ENCODE measurements at regions of chr1 and their contacts with region 1.

Region 1: GRCh38 chr1:209505044-209505443 is 78.5 kb upstream of the CAMK1G start:
- DNase-seq: no peak
- ATAC-seq: no peak
- H3K4me3 ChIP-seq: no peak overlapping the region
- H3K27ac ChIP-seq: no peak overlapping the region
- H3K4me1 ChIP-seq: no peaks in the 10 kb centered on the region
- CTCF ChIP-seq: no peak
- EP300 ChIP-seq: no peak
- POLR2A ChIP-seq: no peak
- RAD21 ChIP-seq: no peak

Region 2: GRCh38 chr1:209493559-209493958 is 11.5 kb before region 1 on chr1:
- CTCF ChIA-PET with region 1: interaction called, 11 read pairs
- POLR2A ChIA-PET with region 1: no interaction called
- DNase-seq: no peak
- ATAC-seq: no peak
- H3K4me3 ChIP-seq: no peak overlapping the region
- H3K27ac ChIP-seq: no peak overlapping the region
- H3K4me1 ChIP-seq: no peaks in the 10 kb centered on the region
- CTCF ChIP-seq: no peak
- EP300 ChIP-seq: no peak
- POLR2A ChIP-seq: no peak
- RAD21 ChIP-seq: no peak

Region 3: GRCh38 chr1:209527993-209528392 is 22.9 kb after region 1 on chr1:
- CTCF ChIA-PET with region 1: no interaction called
- POLR2A ChIA-PET with region 1: no interaction called
- DNase-seq: peak; percentile 12 to 81
- ATAC-seq: peak; percentile 71 to 91
- H3K4me3 ChIP-seq: no peak overlapping the region
- H3K27ac ChIP-seq: peak overlapping the region; percentile 69
- H3K4me1 ChIP-seq: peaks cover 18% of the 10 kb centered on the region
- CTCF ChIP-seq: no peak
- EP300 ChIP-seq: no peak
- POLR2A ChIP-seq: no peak
- RAD21 ChIP-seq: no peak

Region 4: DNA sequence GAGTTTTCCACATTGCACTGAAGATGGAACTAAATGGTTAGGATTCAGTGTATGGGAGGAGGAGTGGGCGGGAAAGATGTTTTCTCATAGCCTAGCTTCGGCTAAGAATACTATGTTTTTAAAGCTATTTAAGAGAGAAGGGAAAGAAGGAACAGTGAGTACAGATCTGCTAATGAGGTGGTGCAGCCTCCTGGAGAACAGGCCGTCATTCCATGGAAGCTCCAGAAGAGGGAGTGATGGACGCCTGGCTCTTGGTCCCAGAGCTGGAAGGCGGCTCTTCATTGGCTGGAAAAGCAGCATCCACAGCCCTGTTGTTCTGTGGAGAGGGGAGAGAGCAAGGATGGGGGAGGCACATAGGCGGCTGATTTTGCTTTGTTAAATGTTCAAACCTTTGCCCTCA is 85.4 kb after region 1 on chr1:
- CTCF ChIA-PET with region 1: no interaction called
- POLR2A ChIA-PET with region 1: no interaction called
- DNase-seq: peak in 1 of 2 experiments; percentile 43
- ATAC-seq: peak; percentile 60 to 87; a peak in 5 of 6 replicates
- H3K4me3 ChIP-seq: no peak overlapping the region
- H3K27ac ChIP-seq: no peak overlapping the region
- H3K4me1 ChIP-seq: peaks cover 10% of the 10 kb centered on the region
- CTCF ChIP-seq: no peak
- EP300 ChIP-seq: no peak
- POLR2A ChIP-seq: no peak
- RAD21 ChIP-seq: 0 out of 5 replicates have a peak, but pooled peaks of 1 of the 2 experiments have one; percentile 10